CD8-positive, alpha-beta memory T cell (primary cell): ENCODE measurements at regions of chr17 and their contacts with region 1.

Region 1: GRCh38 chr17:39153599-39154051 is 2.2 kb upstream of the PLXDC1 start:
- DNase-seq: peak; percentile 86 to 97 (median 88)
- H3K4me3 ChIP-seq: peak overlapping the region; percentile 87
- H3K4me3 Mint-ChIP-seq: peak overlapping the region; percentile 94 to 100 (median 99)
- H3K27ac ChIP-seq: peak overlapping the region; percentile 67
- H3K27ac Mint-ChIP-seq: peak overlapping the region; percentile 89 to 99 (median 96)
- H3K4me1 ChIP-seq: peaks cover 8% of the 10 kb centered on the region
- H3K4me1 Mint-ChIP-seq: peaks cover 47 to 52% (median 48%) of the 10 kb centered on the region in 3 donors
- H3K27me3 ChIP-seq: no peaks in the 10 kb centered on the region
- H3K27me3 Mint-ChIP-seq: peaks cover 0 to 30% of the 10 kb centered on the region in 2 donors

Region 2: GRCh38 chr17:38868817-38869525 is 284.7 kb before region 1 on chr17:
- CTCF ChIA-PET with region 1: interaction called, 36 read pairs
- POLR2A ChIA-PET with region 1: interaction called, 10 read pairs
- DNase-seq: peak; percentile 71 to 91 (median 80)
- H3K4me3 ChIP-seq: peak overlapping the region; percentile 98
- H3K4me3 Mint-ChIP-seq: peak overlapping the region; percentile 94 to 100 (median 98)
- H3K27ac ChIP-seq: peak overlapping the region; percentile 87
- H3K27ac Mint-ChIP-seq: peak overlapping the region; percentile 89 to 99 (median 96)
- H3K4me1 ChIP-seq: peaks cover 42% of the 10 kb centered on the region
- H3K4me1 Mint-ChIP-seq: peaks cover 46 to 47% (median 47%) of the 10 kb centered on the region in 3 donors
- H3K27me3 ChIP-seq: no peaks in the 10 kb centered on the region
- H3K27me3 Mint-ChIP-seq: peaks cover 0 to 12% of the 10 kb centered on the region in 2 donors

Region 3: DNA sequence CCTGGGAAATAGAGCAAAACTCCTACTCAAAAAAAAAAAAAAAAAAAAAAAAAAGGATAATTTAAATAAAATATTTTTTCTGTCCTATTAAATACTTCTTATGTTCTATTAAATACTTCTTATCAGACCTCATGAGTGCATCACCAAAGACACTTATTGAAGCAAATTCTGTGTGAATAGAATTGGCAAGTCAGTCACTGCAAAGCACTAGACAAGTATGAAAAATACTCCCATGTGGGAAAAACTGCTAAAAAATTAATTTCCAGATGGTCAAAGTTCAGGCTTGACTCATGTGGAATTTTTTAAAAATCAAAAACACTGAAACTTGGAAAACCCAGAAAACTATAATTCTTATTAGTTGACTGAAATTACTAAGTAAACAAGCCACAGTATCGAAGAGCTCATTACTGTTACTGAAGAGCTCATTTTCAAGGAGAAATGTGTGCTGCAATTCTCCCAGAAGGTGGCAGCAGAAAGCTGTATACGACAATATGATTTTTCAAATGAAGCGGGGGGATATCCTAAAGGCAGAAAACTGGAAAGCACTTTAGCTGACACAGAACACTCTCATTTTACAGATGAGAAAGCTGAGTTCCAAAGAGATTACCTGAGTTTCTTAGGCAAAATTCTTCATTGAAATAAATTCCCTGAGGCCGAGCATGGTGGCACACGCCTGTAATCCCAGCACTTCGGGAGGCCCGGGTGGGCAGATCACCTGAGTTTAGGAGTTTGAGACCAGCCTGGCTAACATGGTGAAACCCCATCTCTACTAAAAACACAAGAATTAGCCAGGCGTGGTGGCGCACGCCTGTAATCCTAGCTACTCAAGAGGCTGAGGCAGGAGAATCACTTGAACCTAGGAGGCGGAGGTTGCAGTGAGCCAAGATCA is 170.5 kb before region 1 on chr17:
- CTCF ChIA-PET with region 1: interaction called, 128 read pairs
- POLR2A ChIA-PET with region 1: interaction called, 33 read pairs
- DNase-seq: peak in 4 of 5 donors; percentile 27 to 62 (median 58)
- H3K4me3 ChIP-seq: no peak overlapping the region
- H3K4me3 Mint-ChIP-seq: no peak overlapping the region
- H3K27ac ChIP-seq: no peak overlapping the region
- H3K27ac Mint-ChIP-seq: no peak overlapping the region
- H3K4me1 ChIP-seq: no peaks in the 10 kb centered on the region
- H3K4me1 Mint-ChIP-seq: peaks cover 0 to 5% (median 0%) of the 10 kb centered on the region in 3 donors
- H3K27me3 ChIP-seq: no peaks in the 10 kb centered on the region
- H3K27me3 Mint-ChIP-seq: no peaks in the 10 kb centered on the region

Region 4: GRCh38 chr17:39069114-39069756 is 84.4 kb before region 1 on chr17:
- CTCF ChIA-PET with region 1: interaction called, 55 read pairs
- POLR2A ChIA-PET with region 1: interaction called, 6 read pairs
- DNase-seq: peak in 3 of 5 donors; percentile 44 to 56 (median 52)
- H3K4me3 ChIP-seq: no peak overlapping the region
- H3K4me3 Mint-ChIP-seq: no peak overlapping the region
- H3K27ac ChIP-seq: no peak overlapping the region
- H3K27ac Mint-ChIP-seq: peak overlapping the region in 2 of 8 donors; percentile 32 to 38
- H3K4me1 ChIP-seq: no peaks in the 10 kb centered on the region
- H3K4me1 Mint-ChIP-seq: peaks cover 3 to 5% (median 5%) of the 10 kb centered on the region in 3 donors
- H3K27me3 ChIP-seq: no peaks in the 10 kb centered on the region
- H3K27me3 Mint-ChIP-seq: no peaks in the 10 kb centered on the region

Region 5: GRCh38 chr17:39099663-39100286 is 53.9 kb before region 1 on chr17:
- CTCF ChIA-PET with region 1: interaction called, 68 read pairs
- POLR2A ChIA-PET with region 1: no interaction called
- DNase-seq: no peak
- H3K4me3 ChIP-seq: no peak overlapping the region
- H3K4me3 Mint-ChIP-seq: no peak overlapping the region
- H3K27ac ChIP-seq: no peak overlapping the region
- H3K27ac Mint-ChIP-seq: peak overlapping the region in 5 of 8 donors; percentile 12 to 84 (median 61)
- H3K4me1 ChIP-seq: peaks cover 76% of the 10 kb centered on the region
- H3K4me1 Mint-ChIP-seq: peaks cover 38 to 64% (median 45%) of the 10 kb centered on the region in 3 donors
- H3K27me3 ChIP-seq: no peaks in the 10 kb centered on the region
- H3K27me3 Mint-ChIP-seq: no peaks in the 10 kb centered on the region

Region 6: DNA sequence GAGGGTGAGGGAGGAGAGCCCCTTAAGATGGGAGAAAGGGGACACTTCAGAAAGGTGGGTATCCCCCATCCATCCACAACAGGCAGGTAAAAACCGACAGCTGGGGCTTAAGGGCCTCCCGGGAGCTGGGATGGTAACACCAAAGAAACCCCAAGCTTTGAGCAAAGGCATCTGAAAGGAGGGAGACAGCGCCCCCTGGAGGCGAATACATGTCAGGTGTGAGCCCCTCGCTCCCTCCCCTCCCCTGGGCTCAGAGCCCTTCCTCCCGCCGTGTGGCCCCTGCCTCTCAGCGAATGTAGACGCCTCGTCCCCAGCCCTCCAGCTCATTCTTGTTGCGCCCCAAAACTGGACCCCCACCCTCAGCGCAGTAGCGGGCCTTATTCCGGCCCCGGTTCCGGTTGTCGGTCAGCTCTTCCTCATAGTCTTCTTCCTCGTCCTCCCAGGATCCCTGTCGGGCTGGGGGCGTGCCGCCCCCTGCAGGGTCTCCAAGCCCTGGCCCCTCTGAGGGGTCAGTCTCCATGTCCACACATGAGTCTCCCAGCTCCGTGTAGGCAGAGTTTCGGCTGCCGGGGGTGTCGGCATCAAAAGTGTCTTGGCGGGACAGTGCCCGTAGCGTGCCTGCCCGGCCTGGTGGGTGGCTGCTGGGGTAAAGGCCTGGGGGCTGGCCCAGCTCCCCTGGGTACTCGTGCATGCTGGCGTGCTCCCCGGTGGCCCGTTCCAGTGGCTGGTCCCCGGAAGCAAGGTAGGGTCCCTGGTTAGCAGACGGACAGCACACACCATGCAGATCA is 21.5 kb after region 1 on chr17:
- CTCF ChIA-PET with region 1: interaction called, 70 read pairs
- POLR2A ChIA-PET with region 1: interaction called, 7 read pairs
- DNase-seq: peak; percentile 67 to 86 (median 72)
- H3K4me3 ChIP-seq: no peak overlapping the region
- H3K4me3 Mint-ChIP-seq: no peak overlapping the region
- H3K27ac ChIP-seq: no peak overlapping the region
- H3K27ac Mint-ChIP-seq: peak overlapping the region in 3 of 8 donors; percentile 23 to 86 (median 46)
- H3K4me1 ChIP-seq: peaks cover 5% of the 10 kb centered on the region
- H3K4me1 Mint-ChIP-seq: peaks cover 7 to 24% (median 16%) of the 10 kb centered on the region in 3 donors
- H3K27me3 ChIP-seq: no peaks in the 10 kb centered on the region
- H3K27me3 Mint-ChIP-seq: peaks cover 0 to 5% of the 10 kb centered on the region in 2 donors

Region 7: GRCh38 chr17:39186481-39187002 is 32.9 kb after region 1 on chr17:
- CTCF ChIA-PET with region 1: no interaction called
- POLR2A ChIA-PET with region 1: no interaction called
- DNase-seq: no peak
- H3K4me3 ChIP-seq: no peak overlapping the region
- H3K4me3 Mint-ChIP-seq: no peak overlapping the region
- H3K27ac ChIP-seq: no peak overlapping the region
- H3K27ac Mint-ChIP-seq: no peak overlapping the region
- H3K4me1 ChIP-seq: no peaks in the 10 kb centered on the region
- H3K4me1 Mint-ChIP-seq: no peaks in the 10 kb centered on the region
- H3K27me3 ChIP-seq: no peaks in the 10 kb centered on the region
- H3K27me3 Mint-ChIP-seq: no peaks in the 10 kb centered on the region

Region 8: GRCh38 chr17:39235555-39236449 is 82.2 kb after region 1 on chr17:
- CTCF ChIA-PET with region 1: interaction called, 11 read pairs
- POLR2A ChIA-PET with region 1: no interaction called
- DNase-seq: peak; percentile 14 to 62 (median 48)
- H3K4me3 ChIP-seq: no peak overlapping the region
- H3K4me3 Mint-ChIP-seq: peak overlapping the region in 2 of 7 donors; percentile 5 to 26
- H3K27ac ChIP-seq: no peak overlapping the region
- H3K27ac Mint-ChIP-seq: peak overlapping the region; percentile 34 to 93 (median 83)
- H3K4me1 ChIP-seq: peaks cover 53% of the 10 kb centered on the region
- H3K4me1 Mint-ChIP-seq: peaks cover 33 to 45% (median 42%) of the 10 kb centered on the region in 3 donors
- H3K27me3 ChIP-seq: no peaks in the 10 kb centered on the region
- H3K27me3 Mint-ChIP-seq: peaks cover 7 to 13% of the 10 kb centered on the region in 2 donors

Region 9: DNA sequence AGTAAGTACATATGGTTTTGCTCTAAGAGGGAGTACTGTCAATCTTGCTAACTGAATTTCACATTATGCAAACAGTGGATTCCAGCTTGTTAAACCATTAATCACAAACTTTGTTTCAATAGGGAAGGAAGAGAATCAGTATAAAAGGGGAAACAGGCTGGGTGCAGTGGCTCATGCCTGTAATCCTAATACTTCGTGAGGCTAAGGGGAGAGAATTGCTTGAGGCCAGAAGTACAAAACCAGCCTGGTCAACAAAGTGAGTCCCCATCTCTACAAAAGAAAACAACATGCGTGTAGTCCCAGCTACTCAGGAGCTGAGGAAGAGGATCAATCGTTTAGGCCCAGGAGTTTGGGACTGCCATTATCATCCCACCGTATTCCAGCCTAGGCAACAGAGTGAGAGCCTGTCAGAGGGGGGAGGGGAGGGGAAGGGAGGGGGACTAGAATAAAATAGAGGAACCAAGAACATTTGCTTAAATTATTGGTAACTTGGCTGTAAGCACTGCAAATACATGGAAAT is 182.1 kb after region 1 on chr17:
- CTCF ChIA-PET with region 1: no interaction called
- POLR2A ChIA-PET with region 1: no interaction called
- DNase-seq: no peak
- H3K4me3 ChIP-seq: no peak overlapping the region
- H3K4me3 Mint-ChIP-seq: no peak overlapping the region
- H3K27ac ChIP-seq: peak overlapping the region; percentile 62
- H3K27ac Mint-ChIP-seq: no peak overlapping the region
- H3K4me1 ChIP-seq: no peaks in the 10 kb centered on the region
- H3K4me1 Mint-ChIP-seq: peaks cover 4 to 8% (median 6%) of the 10 kb centered on the region in 3 donors
- H3K27me3 ChIP-seq: no peaks in the 10 kb centered on the region
- H3K27me3 Mint-ChIP-seq: no peaks in the 10 kb centered on the region

Region 10: DNA sequence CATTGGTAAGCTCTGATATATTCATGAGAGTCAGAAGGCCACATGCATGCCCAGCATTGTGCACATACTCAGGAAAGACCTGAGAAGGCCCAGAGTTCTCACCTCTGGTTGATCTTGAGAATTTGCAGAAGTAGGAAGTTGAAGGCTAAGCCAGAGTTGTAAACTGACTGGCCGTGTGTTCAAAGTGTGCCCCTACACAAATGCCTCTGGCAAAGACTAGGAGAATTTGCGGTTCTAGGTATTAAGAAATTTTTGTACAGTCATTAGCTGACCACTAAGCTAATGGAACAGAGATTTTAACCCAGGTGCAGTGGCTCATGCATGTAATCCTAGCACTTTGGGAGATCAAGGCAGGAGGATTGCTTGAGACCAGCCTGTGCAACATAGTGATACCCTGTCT is 222.8 kb after region 1 on chr17:
- CTCF ChIA-PET with region 1: no interaction called
- POLR2A ChIA-PET with region 1: no interaction called
- DNase-seq: no peak
- H3K4me3 ChIP-seq: no peak overlapping the region
- H3K4me3 Mint-ChIP-seq: no peak overlapping the region
- H3K27ac ChIP-seq: peak overlapping the region; percentile 40
- H3K27ac Mint-ChIP-seq: peak overlapping the region in 2 of 8 donors; percentile 43 to 60
- H3K4me1 ChIP-seq: no peaks in the 10 kb centered on the region
- H3K4me1 Mint-ChIP-seq: peaks cover 34 to 50% (median 39%) of the 10 kb centered on the region in 3 donors
- H3K27me3 ChIP-seq: no peaks in the 10 kb centered on the region
- H3K27me3 Mint-ChIP-seq: no peaks in the 10 kb centered on the region